GM12878 (cell line): ENCODE measurements at regions of chr6 and their contacts with region 1.

Region 1: DNA sequence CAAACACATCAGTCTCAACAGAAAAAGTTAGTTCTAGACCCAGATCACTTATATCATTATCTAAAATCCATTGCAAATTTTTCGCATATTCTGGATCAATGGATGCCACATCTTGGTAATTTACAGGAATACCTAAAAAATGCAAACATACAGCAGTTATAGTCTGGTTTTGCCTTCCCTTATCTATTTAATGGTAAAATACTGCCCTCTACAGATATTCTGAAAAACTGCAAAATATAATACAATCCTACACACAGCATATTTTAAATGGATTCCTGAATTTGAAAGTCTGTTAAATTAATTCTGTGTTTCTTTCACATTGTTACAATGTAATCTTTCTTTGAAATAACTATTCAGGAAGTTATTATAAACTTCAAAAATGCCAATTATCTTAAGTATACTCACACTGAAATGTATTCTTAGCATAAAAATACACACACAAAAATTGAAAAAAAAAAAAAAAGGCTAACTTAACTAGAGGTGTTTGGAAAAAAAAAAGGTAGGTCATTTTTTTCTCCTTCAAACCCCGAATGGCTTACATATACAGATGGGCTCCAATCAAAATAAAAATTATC is 88.4 kb downstream of the HACE1 start:
- DNase-seq: no peak
- ATAC-seq: peak; percentile 84
- H3K4me3 ChIP-seq: no peak overlapping the region
- H3K27ac ChIP-seq: no peak overlapping the region
- H3K4me1 ChIP-seq: no peaks in the 10 kb centered on the region
- H3K27me3 ChIP-seq: no peaks in the 10 kb centered on the region
- CTCF ChIP-seq: peak in 2 of 3 experiments; percentile 46 to 50; a peak in 2 of 6 replicates
- EP300 ChIP-seq: no peak
- POLR2A ChIP-seq: no peak
- RAD21 ChIP-seq: peak; percentile 60

Region 2: GRCh38 chr6:104682722-104683643 is 88.4 kb before region 1 on chr6:
- CTCF ChIA-PET with region 1: interaction called, 37 read pairs
- POLR2A ChIA-PET with region 1: no interaction called
- RAD21 ChIA-PET with region 1: interaction called, 3 read pairs
- SMC1A ChIA-PET with region 1: interaction called, 9 read pairs
- in situ Hi-C with region 1: loop called (anchors 5 kb)
- intact Hi-C with region 1: loop called (anchors 1 kb)
- DNase-seq: no peak
- ATAC-seq: peak; percentile 93
- H3K4me3 ChIP-seq: no peak overlapping the region
- H3K27ac ChIP-seq: no peak overlapping the region
- H3K4me1 ChIP-seq: no peaks in the 10 kb centered on the region
- H3K27me3 ChIP-seq: no peaks in the 10 kb centered on the region
- CTCF ChIP-seq: peak; percentile 75 to 88 (median 77)
- EP300 ChIP-seq: no peak
- POLR2A ChIP-seq: no peak
- RAD21 ChIP-seq: peak; percentile 78

Region 3: GRCh38 chr6:104689551-104690205 is 81.7 kb before region 1 on chr6:
- CTCF ChIA-PET with region 1: interaction called, 37 read pairs
- POLR2A ChIA-PET with region 1: no interaction called
- RAD21 ChIA-PET with region 1: no interaction called
- SMC1A ChIA-PET with region 1: interaction called, 9 read pairs
- in situ Hi-C with region 1: loop called (anchors 5 kb)
- intact Hi-C with region 1: no loop called
- DNase-seq: no peak
- ATAC-seq: no peak
- H3K4me3 ChIP-seq: no peak overlapping the region
- H3K27ac ChIP-seq: no peak overlapping the region
- H3K4me1 ChIP-seq: no peaks in the 10 kb centered on the region
- H3K27me3 ChIP-seq: no peaks in the 10 kb centered on the region
- CTCF ChIP-seq: no peak
- EP300 ChIP-seq: no peak
- POLR2A ChIP-seq: no peak
- RAD21 ChIP-seq: no peak

Region 4: DNA sequence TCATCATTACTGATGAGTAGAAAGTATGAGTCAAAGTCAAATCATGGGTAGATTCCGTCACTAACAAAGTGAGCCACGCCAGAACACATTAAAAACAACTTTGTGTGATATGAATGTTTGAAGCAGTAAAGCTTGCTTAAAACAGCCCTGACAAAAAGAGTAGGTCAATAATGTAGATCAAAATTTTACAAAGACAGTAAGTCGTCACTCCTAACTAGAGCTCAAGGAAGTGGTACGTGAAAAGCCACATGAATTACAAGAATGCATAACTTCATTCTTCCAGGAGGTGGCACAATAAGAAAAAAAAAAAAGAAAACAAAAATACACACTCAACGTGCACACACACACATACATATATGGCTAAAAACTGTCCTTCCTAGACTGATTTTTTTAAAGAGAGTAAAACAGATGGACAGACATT is 18.4 kb after region 1 on chr6:
- CTCF ChIA-PET with region 1: interaction called, 10 read pairs
- POLR2A ChIA-PET with region 1: interaction called, 3 read pairs
- RAD21 ChIA-PET with region 1: interaction called, 4 read pairs
- SMC1A ChIA-PET with region 1: interaction called, 3 read pairs
- in situ Hi-C with region 1: no loop called
- intact Hi-C with region 1: no loop called
- DNase-seq: no peak
- ATAC-seq: peak; percentile 90
- H3K4me3 ChIP-seq: no peak overlapping the region
- H3K27ac ChIP-seq: no peak overlapping the region
- H3K4me1 ChIP-seq: peaks cover 3% of the 10 kb centered on the region; the same call in 1 of the 2 replicates
- H3K27me3 ChIP-seq: no peaks in the 10 kb centered on the region
- CTCF ChIP-seq: peak; percentile 30 to 46 (median 41); a peak in 4 of 6 replicates
- EP300 ChIP-seq: no peak
- POLR2A ChIP-seq: no peak
- RAD21 ChIP-seq: peak; percentile 34; the same call in 1 of the 2 replicates

Region 5: GRCh38 chr6:105069821-105070445 is 298.6 kb after region 1 on chr6:
- CTCF ChIA-PET with region 1: no interaction called
- POLR2A ChIA-PET with region 1: no interaction called
- RAD21 ChIA-PET with region 1: no interaction called
- SMC1A ChIA-PET with region 1: no interaction called
- in situ Hi-C with region 1: no loop called
- intact Hi-C with region 1: no loop called
- DNase-seq: no peak
- ATAC-seq: no peak
- H3K4me3 ChIP-seq: no peak overlapping the region
- H3K27ac ChIP-seq: no peak overlapping the region
- H3K4me1 ChIP-seq: no peaks in the 10 kb centered on the region
- H3K27me3 ChIP-seq: no peaks in the 10 kb centered on the region
- CTCF ChIP-seq: no peak
- EP300 ChIP-seq: no peak
- POLR2A ChIP-seq: no peak
- RAD21 ChIP-seq: no peak